Naive thymus-derived CD8-positive, alpha-beta T cell (primary cell): ENCODE measurements at regions of chr3 and their contacts with region 1.

Region 1: GRCh38 chr3:13452490-13453335 is 27.4 kb upstream of the HDAC11 start:
- DNase-seq: peak in 8 of 10 donors; percentile 25 to 70 (median 60)
- ATAC-seq: peak; percentile 24 to 28
- H3K4me3 Mint-ChIP-seq: peak overlapping the region; percentile 85 to 99 (median 96)
- H3K27ac Mint-ChIP-seq: peak overlapping the region; percentile 85 to 97 (median 94)
- H3K4me1 Mint-ChIP-seq: peaks cover 0 to 27% (median 18%) of the 10 kb centered on the region in 4 donors
- H3K27me3 Mint-ChIP-seq: no peaks in the 10 kb centered on the region

Region 2: GRCh38 chr3:13346481-13347389 is 106.0 kb before region 1 on chr3:
- POLR2A ChIA-PET with region 1: interaction called, 68 read pairs
- DNase-seq: peak; percentile 50 to 91 (median 78)
- ATAC-seq: peak; percentile 87
- H3K4me3 Mint-ChIP-seq: peak overlapping the region; percentile 40 to 88 (median 68)
- H3K27ac Mint-ChIP-seq: peak overlapping the region; percentile 86 to 96 (median 91)
- H3K4me1 Mint-ChIP-seq: peaks cover 38 to 74% (median 67%) of the 10 kb centered on the region in 4 donors
- H3K27me3 Mint-ChIP-seq: no peaks in the 10 kb centered on the region

Region 3: GRCh38 chr3:13391308-13391707 is 61.4 kb before region 1 on chr3:
- POLR2A ChIA-PET with region 1: interaction called, 14 read pairs
- DNase-seq: peak in 4 of 10 donors; percentile 13 to 27 (median 20)
- ATAC-seq: peak in 1 of 2 donors; percentile 25
- H3K4me3 Mint-ChIP-seq: no peak overlapping the region
- H3K27ac Mint-ChIP-seq: peak overlapping the region in 5 of 10 donors; percentile 19 to 85 (median 79)
- H3K4me1 Mint-ChIP-seq: peaks cover 15 to 55% (median 23%) of the 10 kb centered on the region in 4 donors
- H3K27me3 Mint-ChIP-seq: no peaks in the 10 kb centered on the region

Region 4: GRCh38 chr3:13414040-13414729 is 38.5 kb before region 1 on chr3:
- POLR2A ChIA-PET with region 1: interaction called, 56 read pairs
- DNase-seq: peak; percentile 48 to 85 (median 74)
- ATAC-seq: peak; percentile 91 to 93
- H3K4me3 Mint-ChIP-seq: peak overlapping the region; percentile 65 to 93 (median 88)
- H3K27ac Mint-ChIP-seq: peak overlapping the region; percentile 91 to 99 (median 96)
- H3K4me1 Mint-ChIP-seq: peaks cover 31 to 80% (median 67%) of the 10 kb centered on the region in 4 donors
- H3K27me3 Mint-ChIP-seq: no peaks in the 10 kb centered on the region

Region 5: GRCh38 chr3:13419505-13420044 is 33.1 kb before region 1 on chr3:
- POLR2A ChIA-PET with region 1: interaction called, 56 read pairs
- DNase-seq: peak; percentile 43 to 70 (median 60)
- ATAC-seq: peak; percentile 44 to 67
- H3K4me3 Mint-ChIP-seq: peak overlapping the region; percentile 87 to 95 (median 91)
- H3K27ac Mint-ChIP-seq: peak overlapping the region; percentile 91 to 99 (median 96)
- H3K4me1 Mint-ChIP-seq: peaks cover 33 to 72% (median 66%) of the 10 kb centered on the region in 4 donors
- H3K27me3 Mint-ChIP-seq: no peaks in the 10 kb centered on the region

Region 6: DNA sequence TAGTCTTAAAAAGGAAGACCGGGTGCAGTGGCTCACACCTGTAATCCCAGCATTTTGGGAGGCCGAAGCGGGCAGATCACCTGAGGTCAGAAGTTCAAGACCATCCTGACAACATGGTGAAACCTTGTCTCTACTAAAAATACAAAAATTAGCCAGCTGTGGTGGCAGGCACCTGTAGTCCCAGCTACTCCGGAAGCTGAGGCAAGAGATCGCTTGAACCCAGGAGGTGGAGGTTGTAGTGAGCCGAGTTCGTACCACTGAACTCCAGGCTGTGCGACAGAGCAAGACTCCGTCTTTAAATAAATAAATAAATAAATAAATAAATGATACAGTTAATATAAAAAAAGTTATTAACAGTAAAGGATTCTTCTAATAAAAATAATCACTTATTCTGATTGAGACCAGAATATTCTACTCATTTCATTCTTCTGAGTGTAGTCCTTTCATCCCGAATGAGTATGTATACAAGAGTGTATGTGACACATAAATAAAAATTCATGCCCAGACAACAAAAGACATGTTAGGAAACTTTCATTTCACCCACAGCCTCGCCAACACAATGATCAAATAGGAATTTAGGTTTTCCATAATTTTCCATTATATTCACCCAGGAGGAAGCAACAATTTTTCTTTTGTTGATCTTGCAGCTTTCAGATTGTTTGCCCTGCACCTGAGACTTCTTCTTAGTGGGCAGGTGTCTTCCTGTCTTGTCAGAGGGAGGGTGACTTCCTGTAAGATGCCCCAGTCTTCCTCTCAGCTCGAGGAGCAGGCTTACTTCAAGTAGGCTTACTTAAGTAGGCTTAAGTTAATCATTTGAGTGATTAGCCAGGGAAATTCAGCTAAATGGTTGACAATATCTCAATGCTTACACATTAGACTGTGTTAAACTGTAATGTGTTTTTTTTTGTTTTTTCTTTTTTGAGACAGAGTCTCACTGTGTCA is 24.8 kb before region 1 on chr3:
- POLR2A ChIA-PET with region 1: interaction called, 41 read pairs
- DNase-seq: peak in 8 of 10 donors; percentile 16 to 70 (median 46)
- ATAC-seq: peak; percentile 100
- H3K4me3 Mint-ChIP-seq: peak overlapping the region; percentile 6 to 80 (median 70)
- H3K27ac Mint-ChIP-seq: peak overlapping the region; percentile 88 to 95 (median 92)
- H3K4me1 Mint-ChIP-seq: peaks cover 9 to 51% (median 32%) of the 10 kb centered on the region in 4 donors
- H3K27me3 Mint-ChIP-seq: no peaks in the 10 kb centered on the region

Region 7: GRCh38 chr3:13581485-13582380 is 129.0 kb after region 1 on chr3:
- POLR2A ChIA-PET with region 1: no interaction called
- DNase-seq: peak in 2 of 10 donors; percentile 10 to 17
- ATAC-seq: peak; percentile 44 to 71
- H3K4me3 Mint-ChIP-seq: peak overlapping the region in 2 of 10 donors; percentile 4 to 20
- H3K27ac Mint-ChIP-seq: peak overlapping the region in 3 of 10 donors; percentile 35 to 62 (median 44)
- H3K4me1 Mint-ChIP-seq: peaks cover 1 to 26% (median 14%) of the 10 kb centered on the region in 4 donors
- H3K27me3 Mint-ChIP-seq: no peaks in the 10 kb centered on the region